Heart right ventricle (tissue), 16 donors: ENCODE measurements at regions of chr6 and their contacts with region 1.

Region 1: GRCh38 chr6:75284632-75285286 is at the start of gene TMEM30A:
- DNase-seq: peak; percentile 95 to 98
- ATAC-seq: peak; percentile 99 to 100 (median 100)
- H3K4me3 ChIP-seq: peak within 1 kb of the TSS; percentile 80 to 96 (median 90)
- H3K27ac ChIP-seq: peak within 1 kb of the TSS; percentile 68 to 95 (median 92)
- H3K4me1 ChIP-seq: peaks cover 0 to 62% (median 46%) of the 10 kb centered on the region in 9 donors
- H3K27me3 ChIP-seq: no peaks in the 10 kb centered on the region
- CTCF ChIP-seq: peak in 3 of 9 donors; percentile 10 to 16 (median 13)
- total RNA-seq, gene TMEM30A: 42.6 to 68.0 (median 55.9) TPM

Region 2: GRCh38 chr6:75418233-75418632 is 133.5 kb after region 1 on chr6:
- intact Hi-C with region 1: no loop called
- DNase-seq: no peak
- ATAC-seq: peak in 7 of 8 donors; percentile 51 to 80 (median 70)
- H3K4me3 ChIP-seq: no peak overlapping the region
- H3K27ac ChIP-seq: peak overlapping the region in 6 of 10 donors; percentile 6 to 68 (median 43)
- H3K4me1 ChIP-seq: peaks cover 4 to 96% (median 74%) of the 10 kb centered on the region in 9 donors
- H3K27me3 ChIP-seq: no peaks in the 10 kb centered on the region
- CTCF ChIP-seq: no peak

Region 3: GRCh38 chr6:75601304-75602245 is 316.8 kb after region 1 on chr6 and contains the start of gene SENP6:
- intact Hi-C with region 1: loop called in 1 of 10 experiments (anchors 10 kb)
- DNase-seq: peak; percentile 82 to 87
- ATAC-seq: peak; percentile 90 to 97 (median 94)
- H3K4me3 ChIP-seq: peak within 1 kb of the TSS; percentile 53 to 97 (median 88)
- H3K27ac ChIP-seq: peak within 1 kb of the TSS; percentile 95 to 99 (median 98)
- H3K4me1 ChIP-seq: peaks cover 0 to 54% (median 29%) of the 10 kb centered on the region in 9 donors
- H3K27me3 ChIP-seq: no peaks in the 10 kb centered on the region
- CTCF ChIP-seq: no peak
- total RNA-seq, gene SENP6: 48.8 to 72.5 (median 64.9) TPM